ENCODE measurements at regions of chr7 and their contacts with region 1.

Region 1: DNA sequence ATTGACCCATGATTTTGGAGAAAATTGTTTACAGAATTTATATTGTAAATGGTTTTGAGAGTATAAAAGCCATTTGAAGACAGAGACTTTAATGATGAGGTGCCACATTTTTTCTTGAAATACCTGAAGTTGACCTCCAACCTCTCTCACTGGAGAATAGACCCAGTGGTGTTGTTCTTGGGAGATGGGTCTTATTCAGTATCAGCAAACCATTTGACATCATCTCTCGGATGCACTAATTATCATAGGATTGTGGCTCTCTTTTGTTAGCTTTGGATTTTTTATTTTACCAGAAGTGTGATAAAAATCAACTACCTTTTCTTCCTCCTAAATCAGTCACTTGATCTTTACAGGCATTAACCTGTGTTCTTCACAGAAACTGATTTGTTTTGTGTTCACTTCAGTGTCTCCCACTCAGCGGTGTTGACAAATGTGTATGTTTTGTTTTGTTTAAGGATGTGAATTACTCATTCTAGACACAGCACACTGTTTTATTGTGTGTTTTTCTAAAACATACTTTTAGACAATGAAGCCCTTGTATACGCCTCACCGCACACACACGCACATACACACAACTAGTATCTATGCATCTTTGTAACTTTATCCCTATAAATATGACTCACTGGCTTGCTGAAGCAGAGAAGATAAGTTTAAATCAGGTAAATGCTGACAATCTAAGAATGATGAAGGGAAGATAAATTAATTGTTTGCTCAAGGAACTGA is 455.6 kb downstream of the INHBA start:
- DNase-seq: peak; percentile 96
- ATAC-seq: peak; percentile 92
- H3K4me3 ChIP-seq: no peak overlapping the region
- H3K27ac ChIP-seq: peak overlapping the region; percentile 97
- H3K4me1 ChIP-seq: peaks cover 38% of the 10 kb centered on the region
- H3K27me3 ChIP-seq: no peaks in the 10 kb centered on the region
- CTCF ChIP-seq: no peak

Region 2: DNA sequence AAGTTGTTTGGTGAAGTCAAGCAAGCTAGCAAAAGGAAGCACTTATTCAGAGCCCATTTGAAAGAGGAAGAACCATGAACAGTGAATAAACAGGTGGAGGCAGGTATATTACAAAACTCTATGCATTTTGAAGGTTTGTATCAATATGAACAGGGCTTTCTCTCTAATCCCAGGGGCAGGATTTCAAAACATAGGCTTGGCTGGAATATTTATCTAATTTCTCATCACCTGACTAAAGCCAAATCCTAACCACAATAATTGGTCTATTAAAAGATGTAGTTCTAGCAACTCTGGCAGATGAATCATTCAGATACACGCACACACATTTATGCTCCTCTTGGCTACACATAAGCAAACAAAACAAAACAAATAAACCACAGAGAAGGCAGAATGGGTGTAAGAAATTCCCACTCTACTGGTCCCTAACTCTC is 98.8 kb before region 1 on chr7:
- CTCF ChIA-PET with region 1: no interaction called
- POLR2A ChIA-PET with region 1: no interaction called
- intact Hi-C with region 1: loop called (anchors 1 kb)
- DNase-seq: peak; percentile 97
- ATAC-seq: peak; percentile 85
- H3K4me3 ChIP-seq: no peak overlapping the region
- H3K27ac ChIP-seq: peak overlapping the region; percentile 99
- H3K4me1 ChIP-seq: peaks cover 48% of the 10 kb centered on the region
- H3K27me3 ChIP-seq: no peaks in the 10 kb centered on the region
- CTCF ChIP-seq: no peak

Region 3: GRCh38 chr7:41183741-41184140 is 63.6 kb before region 1 on chr7:
- CTCF ChIA-PET with region 1: no interaction called
- POLR2A ChIA-PET with region 1: no interaction called
- intact Hi-C with region 1: loop called (anchors 1 kb)
- DNase-seq: peak; percentile 86
- ATAC-seq: peak; percentile 62
- H3K4me3 ChIP-seq: no peak overlapping the region
- H3K27ac ChIP-seq: peak overlapping the region; percentile 99
- H3K4me1 ChIP-seq: peaks cover 61% of the 10 kb centered on the region
- H3K27me3 ChIP-seq: no peaks in the 10 kb centered on the region
- CTCF ChIP-seq: 0 out of 2 replicates have a peak, but pooled peaks have one; percentile 17

Region 4: GRCh38 chr7:41224063-41224806 is 23.1 kb before region 1 on chr7:
- CTCF ChIA-PET with region 1: no interaction called
- POLR2A ChIA-PET with region 1: no interaction called
- intact Hi-C with region 1: loop called (anchors 1 kb)
- DNase-seq: peak; percentile 98
- ATAC-seq: peak; percentile 85
- H3K4me3 ChIP-seq: no peak overlapping the region
- H3K27ac ChIP-seq: peak overlapping the region; percentile 98
- H3K4me1 ChIP-seq: peaks cover 38% of the 10 kb centered on the region
- H3K27me3 ChIP-seq: no peaks in the 10 kb centered on the region
- CTCF ChIP-seq: no peak

Region 5: DNA sequence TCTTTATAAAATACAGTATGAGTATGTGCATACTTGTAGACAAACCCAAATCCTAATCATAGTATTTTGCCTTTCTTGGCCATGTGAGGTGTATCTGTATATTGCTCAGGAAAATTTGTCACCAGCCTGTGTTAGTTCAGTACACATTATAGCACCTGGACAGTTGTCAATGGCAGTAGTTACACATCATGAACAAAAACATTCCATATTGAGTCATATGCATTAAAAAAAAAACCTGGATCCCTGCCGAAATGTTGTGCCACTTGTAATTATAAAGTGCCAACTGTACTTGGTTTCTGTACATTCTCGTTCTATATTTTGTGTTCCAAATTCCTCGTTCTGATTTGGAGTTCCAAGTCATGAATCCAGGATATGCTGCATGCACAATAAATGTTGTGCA is 45.2 kb after region 1 on chr7:
- CTCF ChIA-PET with region 1: no interaction called
- POLR2A ChIA-PET with region 1: no interaction called
- intact Hi-C with region 1: loop called (anchors 1 kb)
- DNase-seq: peak; percentile 93
- ATAC-seq: peak; percentile 99
- H3K4me3 ChIP-seq: no peak overlapping the region
- H3K27ac ChIP-seq: peak overlapping the region; percentile 28
- H3K4me1 ChIP-seq: peaks cover 15% of the 10 kb centered on the region
- H3K27me3 ChIP-seq: no peaks in the 10 kb centered on the region
- CTCF ChIP-seq: no peak

Region 6: DNA sequence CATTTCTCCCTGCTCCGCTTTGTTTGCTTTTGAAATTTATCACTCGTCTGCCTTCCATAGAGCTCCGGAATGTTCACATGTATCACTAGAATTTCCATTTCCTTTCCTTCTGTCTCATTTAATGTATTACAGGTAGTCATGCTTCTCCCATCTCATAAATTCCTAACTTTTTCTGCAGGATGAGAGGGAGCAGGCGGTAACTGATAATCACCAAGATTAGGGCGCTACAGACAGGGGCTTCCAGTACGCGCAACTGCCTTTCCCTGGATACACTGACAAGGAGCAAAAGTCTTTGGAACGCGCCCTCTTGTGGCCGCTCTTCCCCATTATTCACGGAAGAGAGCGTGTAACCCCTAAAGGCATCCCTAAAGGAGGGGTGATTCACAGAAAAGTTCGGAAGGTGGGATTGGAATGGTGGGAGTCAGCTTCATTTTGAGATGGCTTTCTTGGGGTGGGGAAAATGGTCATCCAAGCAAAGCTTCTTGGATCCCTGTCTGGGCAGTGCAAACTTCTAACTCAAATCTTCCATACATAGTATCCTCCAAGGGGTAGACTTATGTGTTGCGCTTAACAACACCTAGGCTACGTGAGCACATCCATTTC is 449.1 kb after region 1 on chr7:
- CTCF ChIA-PET with region 1: no interaction called
- POLR2A ChIA-PET with region 1: no interaction called
- intact Hi-C with region 1: loop called (anchors 1 kb)
- DNase-seq: peak; percentile 88
- ATAC-seq: peak; percentile 56
- H3K4me3 ChIP-seq: peak overlapping the region; percentile 95
- H3K27ac ChIP-seq: peak overlapping the region; percentile 94
- H3K4me1 ChIP-seq: peaks cover 27% of the 10 kb centered on the region
- H3K27me3 ChIP-seq: no peaks in the 10 kb centered on the region
- CTCF ChIP-seq: peak; percentile 90